MCF 10A (cell line): ENCODE measurements at regions of chr4 and their contacts with region 1.

Region 1: GRCh38 chr4:182448281-182449151 is 205.3 kb downstream of the TENM3 start:
- DNase-seq: peak; percentile 94
- H3K4me3 Mint-ChIP-seq: peak overlapping the region; percentile 92
- H3K27ac Mint-ChIP-seq: peak overlapping the region; percentile 55
- H3K4me1 Mint-ChIP-seq: peaks cover 15% of the 10 kb centered on the region
- H3K27me3 Mint-ChIP-seq: no peaks in the 10 kb centered on the region
- CTCF ChIP-seq: no peak

Region 2: DNA sequence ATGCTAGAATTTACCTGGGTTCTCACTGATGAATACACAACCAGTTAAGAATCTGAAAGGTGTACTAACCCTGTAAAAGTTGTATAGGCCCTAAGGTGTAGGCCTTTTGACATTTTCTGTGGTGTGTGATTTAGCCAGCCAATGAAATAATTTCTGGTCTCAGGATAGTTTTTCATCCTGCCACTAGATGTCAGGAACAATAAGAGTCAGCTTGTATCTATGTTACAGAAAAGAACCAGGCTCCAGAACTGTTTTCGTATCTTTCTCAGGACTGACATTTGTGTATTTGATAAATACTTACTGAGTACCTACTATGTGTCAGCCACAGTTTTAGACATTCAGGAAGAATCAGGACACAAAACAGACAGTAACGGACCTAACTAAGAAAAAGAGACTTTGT is 879.0 kb before region 1 on chr4:
- CTCF ChIA-PET with region 1: no interaction called
- POLR2A ChIA-PET with region 1: no interaction called
- intact Hi-C with region 1: loop called (anchors 1 kb)
- DNase-seq: peak; percentile 67
- H3K4me3 Mint-ChIP-seq: no peak overlapping the region
- H3K27ac Mint-ChIP-seq: no peak overlapping the region
- H3K4me1 Mint-ChIP-seq: no peaks in the 10 kb centered on the region
- H3K27me3 Mint-ChIP-seq: no peaks in the 10 kb centered on the region
- CTCF ChIP-seq: peak; percentile 49

Region 3: GRCh38 chr4:181952478-181952877 is 496.0 kb before region 1 on chr4:
- CTCF ChIA-PET with region 1: no interaction called
- POLR2A ChIA-PET with region 1: no interaction called
- intact Hi-C with region 1: loop called (anchors 10 kb)
- DNase-seq: peak; percentile 93
- H3K4me3 Mint-ChIP-seq: no peak overlapping the region
- H3K27ac Mint-ChIP-seq: peak overlapping the region; percentile 92
- H3K4me1 Mint-ChIP-seq: peaks cover 27% of the 10 kb centered on the region
- H3K27me3 Mint-ChIP-seq: no peaks in the 10 kb centered on the region
- CTCF ChIP-seq: no peak

Region 4: DNA sequence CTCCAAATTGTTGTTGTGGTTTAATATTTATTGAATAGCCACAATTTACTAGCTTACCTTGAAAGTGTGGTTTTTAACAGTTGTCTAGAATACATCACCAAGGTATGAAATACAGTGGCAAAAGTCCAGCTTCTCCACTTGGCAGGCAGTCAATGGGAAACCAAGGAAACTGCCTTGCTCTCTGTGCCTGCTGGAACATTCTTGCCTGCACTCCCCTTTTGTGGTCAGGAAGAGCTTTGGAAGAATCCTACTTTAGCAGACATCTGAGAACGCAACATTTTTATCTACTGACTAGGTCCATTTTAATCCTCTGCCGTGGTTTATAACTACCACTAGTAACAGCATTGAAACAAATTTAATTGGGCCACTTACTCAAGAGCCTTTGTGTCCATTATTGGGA is 140.8 kb before region 1 on chr4:
- CTCF ChIA-PET with region 1: interaction called, 3 read pairs
- POLR2A ChIA-PET with region 1: interaction called, 7 read pairs
- intact Hi-C with region 1: loop called (anchors 2 kb)
- DNase-seq: peak; percentile 97
- H3K4me3 Mint-ChIP-seq: peak overlapping the region; percentile 31
- H3K27ac Mint-ChIP-seq: peak overlapping the region; percentile 90
- H3K4me1 Mint-ChIP-seq: peaks cover 22% of the 10 kb centered on the region
- H3K27me3 Mint-ChIP-seq: no peaks in the 10 kb centered on the region
- CTCF ChIP-seq: no peak

Region 5: GRCh38 chr4:182486881-182487280 is 38.4 kb after region 1 on chr4:
- CTCF ChIA-PET with region 1: no interaction called
- POLR2A ChIA-PET with region 1: no interaction called
- intact Hi-C with region 1: no loop called
- DNase-seq: peak; percentile 2
- H3K4me3 Mint-ChIP-seq: no peak overlapping the region
- H3K27ac Mint-ChIP-seq: no peak overlapping the region
- H3K4me1 Mint-ChIP-seq: peaks cover 5% of the 10 kb centered on the region
- H3K27me3 Mint-ChIP-seq: no peaks in the 10 kb centered on the region
- CTCF ChIP-seq: no peak